Common myeloid progenitor, CD34-positive (primary cell): ENCODE measurements at regions of chr4 and their contacts with region 1.

Region 1: GRCh38 chr4:140326395-140326993 is 47.0 kb upstream of the SCOC start:
- DNase-seq: peak; percentile 59 to 78 (median 76)
- H3K4me3 ChIP-seq: no peak overlapping the region
- H3K27ac ChIP-seq: no peak overlapping the region
- H3K4me1 ChIP-seq: peaks cover 3 to 11% (median 9%) of the 10 kb centered on the region in 4 experiments
- H3K27me3 ChIP-seq: no peaks in the 10 kb centered on the region

Region 2: GRCh38 chr4:140305053-140305452 is 21.4 kb before region 1 on chr4:
- CTCF ChIA-PET with region 1: interaction called, 13 read pairs
- POLR2A ChIA-PET with region 1: interaction called, 5 read pairs
- DNase-seq: no peak
- H3K4me3 ChIP-seq: no peak overlapping the region
- H3K27ac ChIP-seq: no peak overlapping the region
- H3K4me1 ChIP-seq: peaks cover 0 to 11% (median 9%) of the 10 kb centered on the region in 4 experiments
- H3K27me3 ChIP-seq: no peaks in the 10 kb centered on the region

Region 3: DNA sequence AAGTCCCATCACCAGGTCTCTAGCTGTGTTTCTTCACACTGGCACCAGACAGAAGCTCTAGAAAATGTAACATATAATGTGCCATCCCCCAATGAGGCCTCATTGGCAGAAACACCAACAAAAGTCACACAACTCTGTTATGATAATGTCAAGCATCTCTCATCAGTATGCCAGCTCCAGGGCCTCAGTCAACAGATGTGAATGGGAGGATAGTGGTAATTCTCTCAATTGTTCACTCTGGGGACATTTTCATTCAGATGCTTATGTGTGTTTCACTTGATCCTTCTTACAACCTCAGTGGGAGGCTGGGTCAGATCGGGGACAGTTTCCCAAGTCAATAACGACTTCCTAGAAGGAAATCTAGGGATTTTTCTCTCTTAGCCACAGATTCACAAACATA is 10.5 kb before region 1 on chr4:
- CTCF ChIA-PET with region 1: interaction called, 10 read pairs
- POLR2A ChIA-PET with region 1: no interaction called
- DNase-seq: no peak
- H3K4me3 ChIP-seq: no peak overlapping the region
- H3K27ac ChIP-seq: no peak overlapping the region
- H3K4me1 ChIP-seq: peaks cover 0 to 15% (median 6%) of the 10 kb centered on the region in 4 experiments
- H3K27me3 ChIP-seq: no peaks in the 10 kb centered on the region

Region 4: DNA sequence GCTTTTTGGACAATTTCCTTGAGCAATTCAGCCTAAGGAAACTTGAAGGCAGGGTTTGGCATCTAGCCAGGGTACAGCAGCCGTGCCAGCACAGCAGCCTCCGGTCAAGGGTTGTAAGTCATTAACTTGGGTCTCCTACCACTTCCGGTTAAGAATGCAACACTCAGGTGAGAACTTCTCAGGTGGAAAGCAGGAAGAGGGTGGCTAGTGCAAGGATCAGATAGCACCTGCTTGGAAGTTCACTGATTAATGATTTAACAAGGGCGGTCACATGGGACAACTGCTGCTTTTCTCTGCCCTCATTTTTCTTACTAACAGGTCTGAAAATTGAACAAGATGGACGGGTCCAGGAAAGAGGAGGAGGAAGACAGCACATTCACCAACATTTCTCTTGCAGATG is 16.8 kb after region 1 on chr4:
- CTCF ChIA-PET with region 1: interaction called, 24 read pairs
- POLR2A ChIA-PET with region 1: no interaction called
- DNase-seq: peak in 2 of 3 donors; percentile 52 to 58
- H3K4me3 ChIP-seq: peak overlapping the region in 5 of 7 experiments; percentile 26 to 69 (median 49)
- H3K27ac ChIP-seq: no peak overlapping the region
- H3K4me1 ChIP-seq: peaks cover 0 to 8% (median 4%) of the 10 kb centered on the region in 4 experiments
- H3K27me3 ChIP-seq: no peaks in the 10 kb centered on the region

Region 5: GRCh38 chr4:140515423-140515822 is 188.9 kb after region 1 on chr4:
- CTCF ChIA-PET with region 1: no interaction called
- POLR2A ChIA-PET with region 1: no interaction called
- DNase-seq: no peak
- H3K4me3 ChIP-seq: no peak overlapping the region
- H3K27ac ChIP-seq: no peak overlapping the region
- H3K4me1 ChIP-seq: no peaks in the 10 kb centered on the region
- H3K27me3 ChIP-seq: peaks cover 0 to 2% (median 0%) of the 10 kb centered on the region in 5 experiments

Region 6: GRCh38 chr4:140851032-140851636 is 524.6 kb after region 1 on chr4:
- CTCF ChIA-PET with region 1: interaction called, 10 read pairs
- POLR2A ChIA-PET with region 1: no interaction called
- DNase-seq: peak; percentile 75 to 88 (median 84)
- H3K4me3 ChIP-seq: no peak overlapping the region
- H3K27ac ChIP-seq: no peak overlapping the region
- H3K4me1 ChIP-seq: peaks cover 0 to 1% (median 0%) of the 10 kb centered on the region in 4 experiments
- H3K27me3 ChIP-seq: no peaks in the 10 kb centered on the region